Aorta (tissue), 5 donors: ENCODE measurements at regions of chr4 and their contacts with region 1.

Region 1: GRCh38 chr4:186624951-186625350 is 69.6 kb upstream of the MTNR1A start:
- DNase-seq: no peak
- ATAC-seq: no peak
- H3K4me3 ChIP-seq: no peak overlapping the region
- H3K27ac ChIP-seq: no peak overlapping the region
- H3K4me1 ChIP-seq: peaks cover 0 to 11% of the 10 kb centered on the region in 2 donors
- H3K27me3 ChIP-seq: no peaks in the 10 kb centered on the region

Region 2: GRCh38 chr4:185881427-185881826 is 743.5 kb before region 1 on chr4:
- intact Hi-C with region 1: no loop called
- DNase-seq: no peak
- ATAC-seq: no peak
- H3K4me3 ChIP-seq: no peak overlapping the region
- H3K27ac ChIP-seq: no peak overlapping the region
- H3K4me1 ChIP-seq: no peaks in the 10 kb centered on the region
- H3K27me3 ChIP-seq: no peaks in the 10 kb centered on the region

Region 3: GRCh38 chr4:186078980-186079695 is 545.8 kb before region 1 on chr4:
- intact Hi-C with region 1: no loop called
- DNase-seq: no peak
- ATAC-seq: no peak
- H3K4me3 ChIP-seq: no peak overlapping the region
- H3K27ac ChIP-seq: no peak overlapping the region
- H3K4me1 ChIP-seq: no peaks in the 10 kb centered on the region
- H3K27me3 ChIP-seq: no peaks in the 10 kb centered on the region

Region 4: DNA sequence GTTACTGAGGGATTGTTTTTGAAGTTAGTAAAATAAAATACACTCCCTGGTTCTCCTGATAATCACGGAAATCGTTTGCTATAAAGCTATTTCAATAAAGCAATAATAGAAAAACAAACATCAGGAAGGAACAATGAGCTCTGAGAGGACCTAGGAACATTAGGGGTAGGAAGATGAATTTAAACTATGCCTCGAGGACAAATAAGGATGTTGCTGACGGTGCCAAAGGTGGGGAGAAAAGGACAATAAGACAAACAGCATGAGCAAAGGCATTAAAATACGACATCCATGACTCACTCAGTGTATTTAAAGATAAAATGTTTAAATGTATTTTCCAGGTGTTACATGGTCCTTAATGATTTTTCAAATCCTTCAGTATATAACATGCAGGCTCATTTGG is 179.9 kb before region 1 on chr4:
- intact Hi-C with region 1: no loop called
- DNase-seq: no peak
- ATAC-seq: no peak
- H3K4me3 ChIP-seq: no peak overlapping the region
- H3K27ac ChIP-seq: no peak overlapping the region
- H3K4me1 ChIP-seq: no peaks in the 10 kb centered on the region
- H3K27me3 ChIP-seq: no peaks in the 10 kb centered on the region

Region 5: GRCh38 chr4:186554539-186554913 is 70.4 kb before region 1 on chr4:
- intact Hi-C with region 1: no loop called
- DNase-seq: no peak
- ATAC-seq: no peak
- H3K4me3 ChIP-seq: no peak overlapping the region
- H3K27ac ChIP-seq: no peak overlapping the region
- H3K4me1 ChIP-seq: no peaks in the 10 kb centered on the region
- H3K27me3 ChIP-seq: no peaks in the 10 kb centered on the region

Region 6: GRCh38 chr4:186719925-186720694 is 95.2 kb after region 1 on chr4:
- intact Hi-C with region 1: loop called in 1 of 2 experiments (anchors 2 kb)
- DNase-seq: no peak
- ATAC-seq: no peak
- H3K4me3 ChIP-seq: no peak overlapping the region
- H3K27ac ChIP-seq: no peak overlapping the region
- H3K4me1 ChIP-seq: peaks cover 1 to 3% of the 10 kb centered on the region in 2 donors
- H3K27me3 ChIP-seq: no peaks in the 10 kb centered on the region